ENCODE measurements at regions of chr4 and their contacts with region 1.

Region 1: GRCh38 chr4:82842593-82842992 is 44.0 kb upstream of the SCD5 start:
- DNase-seq: no peak
- H3K4me3 ChIP-seq: no peak overlapping the region
- H3K4me3 Mint-ChIP-seq: no peak overlapping the region
- H3K27ac ChIP-seq: no peak overlapping the region
- H3K27ac Mint-ChIP-seq: peak overlapping the region in 1 of 7 donors; percentile 60
- H3K4me1 ChIP-seq: no peaks in the 10 kb centered on the region
- H3K4me1 Mint-ChIP-seq: no peaks in the 10 kb centered on the region
- H3K27me3 ChIP-seq: no peaks in the 10 kb centered on the region
- H3K27me3 Mint-ChIP-seq: no peaks in the 10 kb centered on the region
- CTCF ChIP-seq: peak; percentile 24

Region 2: DNA sequence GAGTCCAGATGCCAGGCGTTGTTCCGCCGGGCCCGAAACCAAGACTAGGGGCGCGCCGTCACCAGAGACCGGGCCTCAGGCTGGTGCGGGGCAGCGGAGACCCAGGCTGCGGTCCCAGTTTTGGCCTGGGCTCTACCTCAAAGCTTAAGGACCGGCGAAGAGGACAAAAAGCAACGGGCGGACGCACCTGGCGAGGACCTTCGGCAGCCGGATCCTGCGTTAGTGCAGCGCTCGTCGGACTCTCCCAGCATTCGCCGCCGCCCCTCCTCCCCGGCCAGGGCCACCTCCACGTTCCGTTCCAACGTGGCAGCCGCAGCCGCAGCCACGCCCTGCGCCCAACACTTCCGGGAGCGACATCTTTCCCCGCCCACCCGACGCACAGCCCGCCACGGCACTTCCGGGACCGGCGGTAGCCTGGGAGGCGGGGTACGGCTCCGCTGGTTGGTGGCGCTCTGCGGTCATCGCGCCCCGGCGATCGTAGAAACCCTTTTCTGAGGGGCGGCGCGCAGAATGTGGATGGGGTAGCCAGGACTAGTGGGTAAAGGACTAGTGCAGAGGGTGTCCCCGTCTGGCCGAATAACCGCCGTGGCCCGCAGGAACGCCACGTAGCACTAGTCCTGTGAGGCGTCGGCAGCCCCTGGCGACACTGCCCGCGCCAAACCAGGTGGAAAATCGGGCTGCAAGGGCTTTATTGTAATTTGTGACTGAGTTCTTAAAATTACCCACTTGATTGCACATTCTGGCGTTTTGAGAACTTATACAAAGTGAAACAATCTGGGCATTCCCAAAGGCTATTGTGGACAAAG is 48.5 kb after region 1 on chr4 and contains the start of gene SEC31A:
- intact Hi-C with region 1: no loop called
- DNase-seq: peak; percentile 94 to 96 (median 94)
- H3K4me3 ChIP-seq: peak within 1 kb of the TSS; percentile 88 to 99 (median 95)
- H3K4me3 Mint-ChIP-seq: peak within 1 kb of the TSS; percentile 89 to 95
- H3K27ac ChIP-seq: peak within 1 kb of the TSS; percentile 95 to 100
- H3K27ac Mint-ChIP-seq: peak within 1 kb of the TSS; percentile 94 to 98 (median 97)
- H3K4me1 ChIP-seq: peaks cover 17 to 26% of the 10 kb centered on the region in 2 donors
- H3K4me1 Mint-ChIP-seq: peaks cover 29% of the 10 kb centered on the region
- H3K27me3 ChIP-seq: no peaks in the 10 kb centered on the region
- H3K27me3 Mint-ChIP-seq: no peaks in the 10 kb centered on the region
- CTCF ChIP-seq: no peak
- polyA plus RNA-seq, gene SEC31A: 74.8 to 120 (median 107) TPM

Region 3: DNA sequence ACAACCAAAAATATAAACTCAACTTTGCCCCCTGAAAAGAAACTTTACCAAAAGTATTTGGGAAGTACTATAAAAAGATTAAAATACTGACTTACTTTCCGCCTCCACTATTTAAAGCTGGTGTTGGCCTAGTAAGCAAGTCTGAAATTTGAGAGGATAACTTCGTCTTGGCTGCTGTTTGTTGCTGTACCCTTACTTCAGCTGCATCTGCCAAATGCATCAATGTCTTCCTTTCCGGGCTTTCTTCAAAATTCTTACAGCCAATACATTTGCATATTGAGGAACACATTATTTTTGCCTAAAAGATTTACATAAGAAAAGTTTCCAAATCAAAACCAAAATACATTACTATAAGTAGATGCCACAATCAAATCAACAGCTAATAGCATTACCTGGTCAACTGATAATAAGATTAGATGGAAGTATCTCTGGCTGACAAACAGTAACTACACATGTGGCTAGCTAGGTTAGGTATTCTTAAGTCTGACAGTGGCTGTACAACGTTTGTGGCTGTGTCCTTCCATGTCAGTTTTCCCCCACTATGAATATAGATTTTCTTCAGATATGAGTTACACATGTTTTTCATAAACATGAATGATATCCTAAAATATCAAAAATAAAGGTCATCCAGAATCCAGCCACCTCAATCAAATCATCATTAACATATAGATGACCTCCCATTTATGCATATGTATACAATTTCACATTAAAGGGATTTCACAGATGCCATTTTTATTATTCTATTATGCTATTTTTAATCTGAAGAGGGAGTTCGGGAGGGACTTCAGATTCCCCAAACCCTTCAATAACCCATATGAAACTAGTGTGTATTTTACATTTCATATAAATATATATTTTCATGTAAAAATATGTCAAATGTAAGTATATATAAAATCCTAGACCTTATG is 88.5 kb after region 1 on chr4:
- intact Hi-C with region 1: loop called in 1 of 2 experiments (anchors 10 kb)
- DNase-seq: no peak
- H3K4me3 ChIP-seq: no peak overlapping the region
- H3K4me3 Mint-ChIP-seq: no peak overlapping the region
- H3K27ac ChIP-seq: peak overlapping the region in 1 of 2 donors; percentile 36
- H3K27ac Mint-ChIP-seq: peak overlapping the region in 1 of 7 donors; percentile 54
- H3K4me1 ChIP-seq: no peaks in the 10 kb centered on the region
- H3K4me1 Mint-ChIP-seq: peaks cover 1% of the 10 kb centered on the region
- H3K27me3 ChIP-seq: no peaks in the 10 kb centered on the region
- H3K27me3 Mint-ChIP-seq: no peaks in the 10 kb centered on the region
- CTCF ChIP-seq: no peak